Activated naive CD4-positive, alpha-beta T cell treated with anti-CD3 and anti-CD28 coated beads, Interleukin-2, amount 10 ng/mL, durations not matched to agents 7 days and 5 days (primary cell): ENCODE measurements at regions of chr14 and their contacts with region 1.

Region 1: DNA sequence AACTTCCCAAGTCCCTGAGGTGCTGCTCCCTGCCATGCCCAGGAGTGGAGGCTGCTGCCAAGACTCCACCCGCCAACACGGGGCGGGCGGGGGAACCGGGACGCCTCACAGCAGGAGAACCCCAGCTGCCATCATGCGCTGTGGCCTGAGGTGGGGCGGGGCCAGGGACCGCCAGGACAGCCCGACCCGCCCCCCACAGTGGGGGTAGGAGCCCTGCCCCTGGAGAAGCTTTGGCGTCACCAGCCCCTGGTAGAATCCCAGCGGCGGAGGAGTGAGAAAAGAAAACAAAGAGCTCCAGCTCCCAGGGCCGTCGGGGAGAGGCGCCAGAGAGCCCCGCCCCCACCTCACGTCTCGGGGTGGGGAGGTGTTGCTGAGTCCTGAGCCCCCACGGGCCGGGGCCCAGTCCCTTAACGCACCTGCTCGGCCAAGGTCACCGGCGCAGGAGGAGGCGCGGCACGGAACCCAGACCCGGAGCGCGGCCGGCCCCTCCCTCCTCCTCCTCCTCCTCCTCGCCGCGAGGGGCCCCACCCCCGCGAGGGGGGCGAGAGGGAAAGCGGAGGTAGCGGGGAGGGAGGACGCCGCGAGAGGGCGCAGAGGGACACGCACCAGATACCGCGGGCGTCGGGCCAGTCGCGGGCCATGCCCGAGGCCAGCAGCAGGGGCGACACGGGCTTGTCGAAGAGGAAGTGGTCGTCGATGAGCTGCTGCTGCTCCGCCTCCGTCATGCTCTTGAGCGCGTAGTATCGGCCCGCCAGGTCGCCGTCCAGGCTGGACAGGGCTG is 1.8 kb downstream of the CKB start:
- DNase-seq: peak; percentile 81
- H3K4me3 Mint-ChIP-seq: peak overlapping the region; percentile 63
- H3K27ac Mint-ChIP-seq: no peak overlapping the region
- H3K4me1 Mint-ChIP-seq: peaks cover 21% of the 10 kb centered on the region
- H3K27me3 Mint-ChIP-seq: peaks cover 69% of the 10 kb centered on the region

Region 2: DNA sequence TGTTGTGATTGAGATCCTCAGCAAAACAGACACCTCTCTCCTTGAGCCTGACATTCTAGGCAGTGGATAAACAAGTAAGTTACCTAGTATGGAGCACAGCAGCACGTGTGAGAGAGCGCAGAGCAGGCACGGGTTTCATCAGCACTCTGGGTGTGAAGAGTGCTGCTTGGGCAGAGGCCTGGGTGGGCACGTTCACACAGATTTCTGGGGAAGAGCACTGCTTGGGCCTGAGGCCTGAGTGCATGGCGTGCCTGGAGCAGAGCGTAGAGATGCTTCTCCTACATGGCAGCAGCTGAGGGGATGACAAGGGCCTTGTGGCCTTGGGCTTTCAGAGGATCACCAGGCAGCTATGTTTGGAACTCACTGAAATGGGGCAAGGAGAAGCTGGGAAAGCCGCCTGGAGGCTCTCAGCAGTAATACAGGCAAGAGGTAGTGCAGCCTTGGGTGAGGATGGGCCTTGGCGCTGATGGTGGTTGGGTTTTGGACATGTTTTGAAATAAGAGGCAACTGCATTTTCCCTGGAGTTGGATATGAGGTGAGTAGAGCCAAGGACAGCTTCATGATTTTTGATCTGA is 15.8 kb before region 1 on chr14:
- CTCF ChIA-PET with region 1: interaction called, 21 read pairs
- DNase-seq: no peak
- H3K4me3 Mint-ChIP-seq: no peak overlapping the region
- H3K27ac Mint-ChIP-seq: no peak overlapping the region
- H3K4me1 Mint-ChIP-seq: peaks cover 3% of the 10 kb centered on the region
- H3K27me3 Mint-ChIP-seq: no peaks in the 10 kb centered on the region

Region 3: GRCh38 chr14:103546652-103547454 is 26.0 kb after region 1 on chr14:
- CTCF ChIA-PET with region 1: interaction called, 33 read pairs
- DNase-seq: peak; percentile 84
- H3K4me3 Mint-ChIP-seq: no peak overlapping the region
- H3K27ac Mint-ChIP-seq: no peak overlapping the region
- H3K4me1 Mint-ChIP-seq: no peaks in the 10 kb centered on the region
- H3K27me3 Mint-ChIP-seq: peaks cover 6% of the 10 kb centered on the region

Region 4: DNA sequence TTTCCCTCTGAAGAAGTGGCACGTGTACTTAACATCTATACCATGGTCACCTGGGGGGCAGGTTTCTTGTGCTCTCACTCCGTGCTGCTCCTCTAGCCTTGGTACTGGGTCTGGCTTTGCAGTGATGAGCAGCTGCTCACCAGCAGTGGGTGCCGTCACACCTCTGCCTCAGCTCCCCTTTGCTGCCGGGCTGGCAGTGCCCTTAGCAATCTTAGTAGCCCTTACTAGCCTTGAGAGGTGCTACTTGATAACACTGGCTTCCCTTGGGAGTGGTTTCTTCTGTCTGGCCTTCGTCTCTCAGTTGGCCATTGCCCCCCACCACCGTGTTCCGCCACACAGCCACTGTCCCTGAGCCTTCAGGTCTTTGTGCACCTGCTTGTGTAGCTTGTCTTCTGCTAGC is 130.7 kb after region 1 on chr14:
- CTCF ChIA-PET with region 1: no interaction called
- DNase-seq: no peak
- H3K4me3 Mint-ChIP-seq: no peak overlapping the region
- H3K27ac Mint-ChIP-seq: no peak overlapping the region
- H3K4me1 Mint-ChIP-seq: peaks cover 2% of the 10 kb centered on the region
- H3K27me3 Mint-ChIP-seq: no peaks in the 10 kb centered on the region